Activated B cell treated with CpG ODN at 0.5 μM for 24 hours (primary cell): ENCODE measurements at regions of chr14 and their contacts with region 1.

Region 1: DNA sequence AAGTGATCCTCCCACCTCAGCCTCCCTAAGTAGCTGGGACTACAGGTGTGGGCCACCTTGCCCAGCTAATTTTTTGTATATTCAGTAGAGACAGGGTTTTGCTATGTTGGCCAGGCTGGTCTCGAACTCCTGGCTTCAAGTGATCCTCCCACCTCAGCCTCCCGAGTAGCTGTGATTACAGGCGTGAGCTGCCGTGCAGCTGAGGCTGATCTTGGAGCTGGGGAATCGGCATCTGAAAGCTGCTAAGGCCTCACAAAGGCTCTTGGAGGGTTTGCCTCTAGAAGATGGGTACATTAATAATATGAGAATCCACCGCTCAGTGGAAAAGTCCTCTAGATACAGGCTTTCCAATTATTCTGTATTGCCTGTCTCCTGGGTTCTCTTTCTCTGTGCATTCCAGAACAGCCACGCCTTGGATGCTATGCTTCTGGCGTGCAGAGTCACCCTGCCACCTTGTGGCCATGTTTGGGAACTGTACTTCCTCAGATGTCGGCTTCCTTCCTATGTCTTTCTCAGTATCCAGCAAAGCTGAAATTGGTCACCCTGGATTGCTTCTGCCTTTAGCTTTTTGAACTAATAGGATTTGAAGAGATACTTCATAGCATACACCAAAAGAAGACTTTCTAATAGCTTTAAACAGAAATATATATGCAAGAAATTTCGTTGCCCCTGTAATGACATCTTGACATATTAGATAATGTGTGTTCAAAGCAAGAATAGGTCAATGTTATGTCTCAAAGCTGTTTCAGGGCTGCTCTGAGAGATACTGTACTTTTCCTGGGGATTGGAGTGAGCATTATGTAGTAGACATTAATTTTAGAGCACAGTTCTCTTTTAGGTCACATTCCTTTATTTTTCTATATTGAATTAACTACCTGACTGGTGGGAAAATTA is 75.4 kb downstream of the SNAPC1 start:
- DNase-seq: peak; percentile 48
- ATAC-seq: peak; percentile 92
- H3K4me3 Mint-ChIP-seq: no peak overlapping the region
- H3K27ac Mint-ChIP-seq: no peak overlapping the region
- H3K4me1 Mint-ChIP-seq: peaks cover 3% of the 10 kb centered on the region
- H3K27me3 Mint-ChIP-seq: peaks cover 3% of the 10 kb centered on the region
- CTCF ChIP-seq: peak; percentile 88

Region 2: DNA sequence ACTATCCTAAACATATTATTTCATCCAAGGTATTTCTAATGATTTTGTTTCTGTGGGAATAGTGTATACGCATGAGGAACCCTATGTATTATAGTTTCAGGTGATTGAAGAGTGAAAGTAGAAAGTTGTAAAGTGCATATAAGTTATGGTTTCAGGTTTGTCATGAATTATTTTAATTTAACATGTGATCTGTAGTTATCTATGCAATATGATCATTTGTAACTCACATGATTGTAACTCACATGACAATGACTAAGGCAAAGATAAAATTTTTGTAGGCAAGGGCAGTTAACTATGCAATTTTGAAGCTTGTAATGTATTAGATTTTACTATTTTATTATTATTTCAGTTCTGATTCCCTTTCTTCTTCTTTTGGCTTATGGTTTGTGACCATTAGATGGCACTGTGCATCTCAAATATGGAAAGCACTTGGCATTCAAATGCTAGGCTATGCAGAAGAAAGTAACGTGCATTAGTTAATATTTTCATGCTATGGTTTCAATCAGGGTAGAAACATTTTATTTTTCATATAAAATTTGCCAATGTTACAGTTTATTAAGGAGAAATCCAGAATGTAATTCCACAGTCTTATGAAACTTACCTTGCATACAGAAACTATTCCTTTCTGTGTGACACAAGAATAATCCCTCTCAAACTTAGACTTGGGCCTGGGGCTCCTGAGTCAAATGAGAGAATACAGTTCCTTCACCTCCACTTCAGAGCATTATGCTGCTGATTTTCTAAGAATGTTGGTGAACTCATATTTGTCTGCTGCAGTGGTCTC is 540.7 kb before region 1 on chr14:
- CTCF ChIA-PET with region 1: interaction called, 13 read pairs
- POLR2A ChIA-PET with region 1: no interaction called
- intact Hi-C with region 1: loop called (anchors 1 kb)
- DNase-seq: no peak
- ATAC-seq: no peak
- H3K4me3 Mint-ChIP-seq: no peak overlapping the region
- H3K27ac Mint-ChIP-seq: no peak overlapping the region
- H3K4me1 Mint-ChIP-seq: no peaks in the 10 kb centered on the region
- H3K27me3 Mint-ChIP-seq: no peaks in the 10 kb centered on the region
- CTCF ChIP-seq: no peak

Region 3: DNA sequence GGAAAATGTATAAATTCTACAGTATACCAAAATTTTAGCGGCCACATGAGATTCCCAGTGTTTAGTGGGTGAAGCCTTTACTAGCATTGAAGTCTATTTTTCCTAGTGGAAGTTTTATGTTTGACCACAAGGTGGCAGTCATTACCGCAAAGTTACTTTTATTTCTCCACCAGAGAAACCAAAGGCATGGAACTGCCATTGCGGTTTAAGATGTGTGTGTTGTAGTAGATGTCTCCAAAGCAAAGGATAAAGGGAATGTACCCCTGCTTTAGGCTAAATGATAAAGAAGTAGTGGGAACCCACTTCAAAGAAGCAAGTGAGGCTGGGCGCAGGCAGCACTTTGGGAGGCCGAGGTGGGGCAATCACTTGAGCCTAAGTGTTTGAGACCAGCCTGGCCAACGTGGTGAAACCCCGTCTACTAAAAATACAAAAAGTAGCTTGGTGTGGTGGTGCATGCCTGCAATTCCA is 375.7 kb before region 1 on chr14:
- CTCF ChIA-PET with region 1: interaction called, 123 read pairs
- POLR2A ChIA-PET with region 1: no interaction called
- intact Hi-C with region 1: loop called (anchors 1 kb)
- DNase-seq: no peak
- ATAC-seq: peak; percentile 68
- H3K4me3 Mint-ChIP-seq: no peak overlapping the region
- H3K27ac Mint-ChIP-seq: no peak overlapping the region
- H3K4me1 Mint-ChIP-seq: peaks cover 16% of the 10 kb centered on the region
- H3K27me3 Mint-ChIP-seq: no peaks in the 10 kb centered on the region
- CTCF ChIP-seq: no peak

Region 4: DNA sequence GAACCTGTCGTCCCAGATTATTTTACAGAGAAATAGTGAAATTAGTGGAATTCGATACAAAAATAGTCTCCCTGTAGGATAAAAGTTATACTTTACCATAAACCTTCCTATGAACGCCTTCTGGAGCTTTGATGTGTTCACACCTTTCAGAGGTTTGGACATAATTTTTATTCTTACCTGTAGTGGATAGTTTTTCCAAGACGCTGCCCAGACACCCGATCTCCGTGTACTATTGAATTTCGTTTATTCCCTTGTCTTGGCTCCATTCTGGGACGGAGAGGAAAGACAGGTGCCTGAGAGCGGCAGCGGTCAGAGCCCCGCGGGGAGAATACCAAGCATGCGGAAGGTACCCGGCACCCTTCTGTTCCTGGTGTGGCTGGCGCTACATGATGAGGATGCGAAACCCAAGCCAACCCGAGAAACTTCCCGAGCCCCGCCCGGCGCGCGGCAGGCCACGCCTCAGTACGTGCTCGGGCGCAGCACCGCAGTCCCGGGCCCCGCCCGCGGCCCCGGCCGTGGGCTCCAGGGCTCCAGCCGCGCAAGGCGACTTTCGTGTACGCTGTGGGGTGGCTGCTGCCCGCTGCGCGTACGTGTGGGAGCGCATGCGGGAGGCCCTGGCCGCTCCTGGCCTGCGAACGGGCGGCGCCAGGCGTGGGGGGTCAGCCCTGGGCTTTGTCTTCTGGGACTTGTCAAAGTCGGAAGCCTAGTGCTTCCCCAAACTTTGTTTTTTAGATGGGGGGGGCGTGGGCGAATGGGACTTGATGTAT is 86.7 kb before region 1 on chr14:
- CTCF ChIA-PET with region 1: interaction called, 14 read pairs
- POLR2A ChIA-PET with region 1: no interaction called
- intact Hi-C with region 1: no loop called
- DNase-seq: peak; percentile 81
- ATAC-seq: peak; percentile 95
- H3K4me3 Mint-ChIP-seq: peak overlapping the region; percentile 87
- H3K27ac Mint-ChIP-seq: peak overlapping the region; percentile 90
- H3K4me1 Mint-ChIP-seq: peaks cover 41% of the 10 kb centered on the region
- H3K27me3 Mint-ChIP-seq: no peaks in the 10 kb centered on the region
- CTCF ChIP-seq: no peak

Region 5: GRCh38 chr14:61872452-61872851 is 34.9 kb after region 1 on chr14:
- CTCF ChIA-PET with region 1: interaction called, 10 read pairs
- POLR2A ChIA-PET with region 1: interaction called, 3 read pairs
- intact Hi-C with region 1: no loop called
- DNase-seq: no peak
- ATAC-seq: peak; percentile 95
- H3K4me3 Mint-ChIP-seq: no peak overlapping the region
- H3K27ac Mint-ChIP-seq: no peak overlapping the region
- H3K4me1 Mint-ChIP-seq: peaks cover 22% of the 10 kb centered on the region
- H3K27me3 Mint-ChIP-seq: peaks cover 9% of the 10 kb centered on the region
- CTCF ChIP-seq: no peak

Region 6: DNA sequence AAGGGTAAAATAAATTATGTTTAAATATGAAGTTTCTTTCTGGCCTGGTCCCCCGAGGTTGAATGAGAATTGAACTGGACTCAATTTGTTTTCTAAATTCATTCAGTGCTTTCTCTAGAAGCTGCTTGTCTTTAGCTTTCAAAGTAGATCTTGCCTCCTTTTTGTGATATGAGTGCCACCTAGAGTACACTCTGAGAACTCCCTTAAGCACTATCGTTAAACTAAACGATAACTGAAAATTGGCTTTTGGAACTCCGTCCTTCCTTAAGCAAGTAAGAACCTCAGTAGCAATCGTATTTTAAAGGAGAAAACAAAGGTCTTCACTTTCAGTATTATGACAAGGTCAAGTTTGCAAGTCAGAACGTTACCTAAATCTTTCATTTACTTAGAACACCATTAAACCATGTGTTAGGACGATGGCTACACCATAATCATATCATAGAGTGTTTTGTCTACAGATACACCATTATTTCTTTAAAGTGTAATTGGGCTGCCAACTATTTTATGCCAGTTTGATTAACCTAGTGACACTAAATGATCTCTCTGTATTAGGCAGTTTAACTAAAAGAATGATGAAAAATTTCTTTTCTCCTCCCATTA is 289.4 kb after region 1 on chr14:
- CTCF ChIA-PET with region 1: interaction called, 49 read pairs
- POLR2A ChIA-PET with region 1: no interaction called
- intact Hi-C with region 1: loop called (anchors 1 kb)
- DNase-seq: no peak
- ATAC-seq: peak; percentile 88
- H3K4me3 Mint-ChIP-seq: no peak overlapping the region
- H3K27ac Mint-ChIP-seq: peak overlapping the region; percentile 41
- H3K4me1 Mint-ChIP-seq: peaks cover 38% of the 10 kb centered on the region
- H3K27me3 Mint-ChIP-seq: peaks cover 2% of the 10 kb centered on the region
- CTCF ChIP-seq: peak; percentile 91

Region 7: DNA sequence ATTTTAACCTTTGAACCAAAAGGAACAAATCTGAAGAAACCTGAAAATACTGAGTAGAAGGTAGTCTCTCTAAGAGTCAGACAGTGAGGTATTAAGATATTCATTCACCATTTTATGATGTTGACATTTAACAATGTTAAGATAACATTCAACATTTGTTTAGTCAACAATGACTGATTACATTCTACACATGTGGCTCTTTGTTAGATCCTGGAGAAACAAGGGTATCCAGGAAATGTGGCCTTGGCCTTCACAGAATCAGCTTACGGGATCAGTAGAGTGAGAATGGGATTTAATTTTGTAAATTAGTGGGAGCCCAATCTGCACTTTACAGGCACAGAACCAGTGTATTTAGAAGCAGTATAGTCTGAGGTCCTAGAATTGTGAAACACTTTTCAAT is 852.2 kb after region 1 on chr14:
- CTCF ChIA-PET with region 1: no interaction called
- POLR2A ChIA-PET with region 1: no interaction called
- intact Hi-C with region 1: no loop called
- DNase-seq: no peak
- ATAC-seq: no peak
- H3K4me3 Mint-ChIP-seq: no peak overlapping the region
- H3K27ac Mint-ChIP-seq: no peak overlapping the region
- H3K4me1 Mint-ChIP-seq: no peaks in the 10 kb centered on the region
- H3K27me3 Mint-ChIP-seq: no peaks in the 10 kb centered on the region
- CTCF ChIP-seq: no peak